Calu3 (cell line): ENCODE measurements at regions of chr2 and their contacts with region 1.

Region 1: DNA sequence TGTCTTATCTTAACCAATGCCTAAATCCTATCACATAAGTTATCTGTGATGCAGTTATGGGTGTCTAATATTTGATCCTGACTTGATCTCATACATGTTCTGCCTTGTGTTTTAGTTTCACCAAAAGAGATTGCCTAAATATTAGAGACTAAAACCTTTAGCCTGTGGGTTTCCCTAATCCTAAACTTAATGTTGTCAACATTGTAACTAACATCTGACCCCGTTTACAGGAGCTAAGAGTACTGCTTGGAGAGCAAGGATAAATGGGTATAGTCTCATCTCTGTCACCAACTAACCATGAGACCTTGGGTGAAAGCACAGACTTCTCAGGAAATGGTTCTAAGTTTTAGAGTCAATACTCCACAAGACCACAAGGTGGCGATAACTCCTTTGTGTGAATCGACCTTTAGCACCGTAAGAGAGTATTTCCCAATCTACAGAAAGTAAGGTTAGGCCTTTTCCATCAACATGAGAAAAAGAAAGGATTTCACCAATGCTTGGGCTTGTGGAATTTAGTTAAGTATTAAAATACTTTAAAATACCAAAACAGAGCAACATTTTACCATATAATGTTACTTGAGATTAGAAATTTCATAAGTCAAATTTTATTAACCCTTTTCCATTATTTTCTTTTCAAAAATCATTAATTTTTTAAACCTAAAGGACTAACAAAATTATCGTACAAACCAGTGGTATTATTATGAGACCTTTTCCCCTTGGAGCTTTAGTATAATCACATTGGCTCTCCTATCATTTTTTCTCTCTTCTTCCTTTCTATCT is 60.5 kb downstream of the G6PC2 start:
- DNase-seq: peak; percentile 77
- H3K4me3 Mint-ChIP-seq: no peak overlapping the region
- H3K27ac Mint-ChIP-seq: peak overlapping the region; percentile 71
- H3K4me1 Mint-ChIP-seq: peaks cover 40% of the 10 kb centered on the region
- H3K27me3 Mint-ChIP-seq: no peaks in the 10 kb centered on the region
- CTCF ChIP-seq: peak; percentile 96

Region 2: DNA sequence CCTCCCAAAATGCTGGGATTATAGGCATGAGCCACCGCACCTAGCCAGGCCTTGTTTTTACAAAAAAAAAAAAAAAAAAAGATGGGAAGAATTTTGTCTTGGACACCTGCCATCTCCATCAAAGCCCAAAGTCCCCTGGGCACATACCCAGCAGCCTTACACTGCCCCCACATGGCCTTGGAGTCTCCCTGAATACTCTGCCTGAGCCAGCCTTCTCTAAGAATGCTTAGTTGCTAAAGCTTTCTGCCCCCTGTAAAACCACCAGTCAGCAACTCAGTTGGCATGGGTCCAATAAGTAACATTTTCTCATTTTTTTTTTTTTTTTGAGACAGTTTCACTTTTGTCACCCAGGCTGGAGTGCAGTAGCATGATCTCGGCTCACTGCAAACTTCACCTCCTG is 112.0 kb before region 1 on chr2:
- CTCF ChIA-PET with region 1: interaction called, 3 read pairs
- intact Hi-C with region 1: loop called (anchors 1 kb)
- DNase-seq: peak; percentile 87
- H3K4me3 Mint-ChIP-seq: no peak overlapping the region
- H3K27ac Mint-ChIP-seq: peak overlapping the region; percentile 14
- H3K4me1 Mint-ChIP-seq: peaks cover 33% of the 10 kb centered on the region
- H3K27me3 Mint-ChIP-seq: no peaks in the 10 kb centered on the region
- CTCF ChIP-seq: peak; percentile 67

Region 3: GRCh38 chr2:168912901-168913369 is 48.7 kb before region 1 on chr2:
- CTCF ChIA-PET with region 1: no interaction called
- intact Hi-C with region 1: no loop called
- DNase-seq: peak; percentile 66
- H3K4me3 Mint-ChIP-seq: peak overlapping the region; percentile 62
- H3K27ac Mint-ChIP-seq: no peak overlapping the region
- H3K4me1 Mint-ChIP-seq: peaks cover 14% of the 10 kb centered on the region
- H3K27me3 Mint-ChIP-seq: peaks cover 27% of the 10 kb centered on the region
- CTCF ChIP-seq: no peak

Region 4: GRCh38 chr2:168935810-168936581 is 25.6 kb before region 1 on chr2:
- CTCF ChIA-PET with region 1: no interaction called
- intact Hi-C with region 1: no loop called
- DNase-seq: no peak
- H3K4me3 Mint-ChIP-seq: no peak overlapping the region
- H3K27ac Mint-ChIP-seq: no peak overlapping the region
- H3K4me1 Mint-ChIP-seq: no peaks in the 10 kb centered on the region
- H3K27me3 Mint-ChIP-seq: no peaks in the 10 kb centered on the region
- CTCF ChIP-seq: no peak

Region 5: GRCh38 chr2:169012812-169013627 is 51.4 kb after region 1 on chr2:
- CTCF ChIA-PET with region 1: interaction called, 8 read pairs
- intact Hi-C with region 1: loop called (anchors 2 kb)
- DNase-seq: peak; percentile 46
- H3K4me3 Mint-ChIP-seq: peak overlapping the region; percentile 35
- H3K27ac Mint-ChIP-seq: peak overlapping the region; percentile 87
- H3K4me1 Mint-ChIP-seq: peaks cover 82% of the 10 kb centered on the region
- H3K27me3 Mint-ChIP-seq: no peaks in the 10 kb centered on the region
- CTCF ChIP-seq: no peak

Region 6: GRCh38 chr2:169109502-169110409 is 148.1 kb after region 1 on chr2:
- CTCF ChIA-PET with region 1: interaction called, 5 read pairs
- intact Hi-C with region 1: loop called (anchors 2 kb)
- DNase-seq: peak; percentile 85
- H3K4me3 Mint-ChIP-seq: no peak overlapping the region
- H3K27ac Mint-ChIP-seq: no peak overlapping the region
- H3K4me1 Mint-ChIP-seq: peaks cover 19% of the 10 kb centered on the region
- H3K27me3 Mint-ChIP-seq: no peaks in the 10 kb centered on the region
- CTCF ChIP-seq: peak; percentile 88

Region 7: DNA sequence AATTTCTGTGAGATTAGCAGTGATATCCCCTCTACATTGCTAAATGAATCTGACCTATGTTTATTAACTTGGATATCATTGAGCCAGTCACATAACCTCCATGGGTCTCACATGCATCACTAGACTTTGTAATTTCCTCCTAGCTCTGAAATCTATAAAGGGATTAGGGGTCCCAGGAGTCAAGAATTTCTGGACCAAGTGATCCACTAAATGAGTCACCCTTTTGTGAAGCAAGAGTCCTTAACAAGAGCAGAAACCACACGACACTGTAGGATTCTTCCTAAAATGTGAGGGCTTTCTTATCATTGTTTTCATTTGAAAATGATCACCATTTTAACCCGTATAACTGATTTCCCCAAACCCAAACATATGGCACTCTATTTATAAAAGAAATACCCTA is 198.0 kb after region 1 on chr2:
- CTCF ChIA-PET with region 1: no interaction called
- intact Hi-C with region 1: no loop called
- DNase-seq: no peak
- H3K4me3 Mint-ChIP-seq: no peak overlapping the region
- H3K27ac Mint-ChIP-seq: no peak overlapping the region
- H3K4me1 Mint-ChIP-seq: no peaks in the 10 kb centered on the region
- H3K27me3 Mint-ChIP-seq: peaks cover 25% of the 10 kb centered on the region
- CTCF ChIP-seq: no peak

Region 8: DNA sequence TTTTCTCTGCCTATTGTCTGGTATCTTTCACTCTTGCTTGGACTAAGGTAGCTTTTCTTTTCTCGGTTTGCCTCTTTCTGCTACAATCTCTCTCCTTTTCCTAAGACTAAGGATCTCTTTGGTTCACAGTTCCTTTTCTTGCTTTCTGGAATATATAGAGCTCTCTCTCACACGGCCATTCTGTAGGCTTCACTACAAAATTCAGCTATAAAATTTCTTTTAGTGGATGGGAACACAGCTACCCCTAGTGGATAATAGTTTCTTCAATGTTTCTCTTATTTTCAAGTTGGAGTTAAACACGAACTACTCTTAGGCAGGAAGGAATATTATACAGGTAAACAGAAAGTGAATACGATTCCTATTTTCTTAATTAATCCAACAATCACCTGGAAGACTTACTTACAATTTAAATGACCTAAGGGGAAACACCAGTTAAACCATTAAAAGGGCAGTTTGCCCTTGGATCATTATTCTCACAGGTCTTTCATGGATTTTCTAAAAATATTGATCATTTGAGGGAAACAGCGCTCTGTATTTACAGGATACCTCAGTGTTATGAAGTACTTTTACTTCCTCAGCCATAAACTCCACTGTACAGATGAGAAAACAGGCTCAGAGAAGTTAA is 260.2 kb after region 1 on chr2:
- CTCF ChIA-PET with region 1: no interaction called
- intact Hi-C with region 1: loop called (anchors 5 kb)
- DNase-seq: no peak
- H3K4me3 Mint-ChIP-seq: no peak overlapping the region
- H3K27ac Mint-ChIP-seq: no peak overlapping the region
- H3K4me1 Mint-ChIP-seq: no peaks in the 10 kb centered on the region
- H3K27me3 Mint-ChIP-seq: no peaks in the 10 kb centered on the region
- CTCF ChIP-seq: peak; percentile 23